GM10248 (cell line): ENCODE measurements at regions of chr2 and their contacts with region 1.

Region 1: GRCh38 chr2:157327621-157328500 is 2.2 kb upstream of the ERMN start:
- DNase-seq: peak; percentile 79
- CTCF ChIP-seq: peak; percentile 93

Region 2: DNA sequence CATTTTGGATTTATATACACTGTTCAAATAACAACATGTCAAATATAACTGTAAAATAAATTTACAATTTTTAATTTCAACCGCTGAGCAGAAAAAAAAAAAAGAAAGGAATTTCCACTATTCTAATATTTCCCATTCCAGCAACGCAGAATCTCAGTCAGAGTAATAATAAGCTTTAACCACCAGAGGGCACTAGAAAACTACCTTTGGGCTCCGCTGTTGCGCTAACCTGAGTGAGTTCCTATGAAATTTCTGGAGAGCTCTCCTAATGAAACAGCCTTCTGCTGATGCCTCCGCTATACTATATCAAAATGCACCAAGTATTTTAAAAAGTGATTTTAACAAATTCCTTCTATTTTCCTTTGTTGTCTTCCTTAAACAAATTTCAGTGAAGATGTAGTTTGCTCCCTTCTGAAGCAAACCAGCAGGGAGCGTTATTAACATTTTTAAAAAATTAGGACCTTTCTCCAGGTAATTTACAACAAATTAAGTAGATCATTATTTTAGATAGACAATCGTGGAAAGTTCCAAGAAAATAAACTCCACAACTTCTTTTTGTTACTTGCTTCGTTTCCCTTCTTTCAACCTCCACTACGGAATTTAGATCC is 25.3 kb before region 1 on chr2:
- CTCF ChIA-PET with region 1: interaction called, 258 read pairs
- POLR2A ChIA-PET with region 1: no interaction called
- DNase-seq: peak; percentile 34
- CTCF ChIP-seq: peak; percentile 61

Region 3: GRCh38 chr2:157349949-157350515 is 22.2 kb after region 1 on chr2:
- CTCF ChIA-PET with region 1: interaction called, 134 read pairs
- POLR2A ChIA-PET with region 1: no interaction called
- DNase-seq: no peak
- CTCF ChIP-seq: no peak

Region 4: DNA sequence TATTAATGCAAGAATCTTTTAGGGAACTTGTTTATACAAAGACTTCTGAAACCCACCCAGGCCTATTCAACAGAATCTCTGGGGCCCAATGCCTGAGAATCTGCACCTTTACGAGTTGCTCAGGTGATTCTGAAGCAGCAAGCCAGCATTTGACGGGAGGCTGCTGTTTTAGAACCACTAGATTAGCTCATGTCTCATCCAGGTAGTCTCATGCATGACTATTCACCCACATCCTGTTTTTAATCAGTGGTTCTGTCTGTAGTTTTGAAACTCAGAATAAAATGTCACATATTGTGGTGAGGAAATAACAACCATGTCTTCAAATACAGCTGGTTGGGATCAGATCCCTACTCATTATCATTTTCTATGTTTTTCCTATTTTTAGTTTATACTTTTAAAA is 76.5 kb after region 1 on chr2:
- CTCF ChIA-PET with region 1: interaction called, 17 read pairs
- POLR2A ChIA-PET with region 1: no interaction called
- DNase-seq: peak; percentile 67
- CTCF ChIP-seq: no peak

Region 5: GRCh38 chr2:157420771-157421323 is 93.0 kb after region 1 on chr2:
- CTCF ChIA-PET with region 1: interaction called, 18 read pairs
- POLR2A ChIA-PET with region 1: interaction called, 5 read pairs
- DNase-seq: no peak
- CTCF ChIP-seq: no peak

Region 6: DNA sequence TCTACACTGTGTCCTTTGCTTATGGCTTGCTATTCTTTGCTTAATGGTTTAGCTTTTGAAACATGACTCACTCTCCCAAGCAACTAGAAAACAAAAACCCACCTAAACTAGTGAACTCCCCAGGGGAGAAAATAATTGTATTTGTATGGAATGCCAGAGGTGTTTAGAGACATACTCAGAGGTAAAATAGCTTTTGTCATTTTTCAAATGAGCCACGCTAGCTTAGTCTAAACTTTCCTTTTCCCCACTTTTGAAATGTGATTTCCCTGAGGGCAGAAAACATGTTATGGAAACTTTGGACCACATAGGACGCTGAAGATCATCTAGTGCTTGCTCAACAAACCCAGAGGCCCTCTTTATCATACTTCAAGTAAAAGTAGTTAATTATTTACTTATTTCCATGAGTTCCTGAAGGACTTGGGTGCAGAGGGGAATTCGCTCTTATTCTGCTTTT is 132.6 kb after region 1 on chr2:
- CTCF ChIA-PET with region 1: interaction called, 27 read pairs
- POLR2A ChIA-PET with region 1: no interaction called
- DNase-seq: no peak
- CTCF ChIP-seq: no peak

Region 7: GRCh38 chr2:157492189-157492773 is 164.4 kb after region 1 on chr2:
- CTCF ChIA-PET with region 1: interaction called, 18 read pairs
- POLR2A ChIA-PET with region 1: no interaction called
- DNase-seq: peak; percentile 65
- CTCF ChIP-seq: peak; percentile 67